Right ventricle myocardium superior (tissue), 1 donor: ENCODE measurements at regions of chr12 and their contacts with region 1.

Region 1: DNA sequence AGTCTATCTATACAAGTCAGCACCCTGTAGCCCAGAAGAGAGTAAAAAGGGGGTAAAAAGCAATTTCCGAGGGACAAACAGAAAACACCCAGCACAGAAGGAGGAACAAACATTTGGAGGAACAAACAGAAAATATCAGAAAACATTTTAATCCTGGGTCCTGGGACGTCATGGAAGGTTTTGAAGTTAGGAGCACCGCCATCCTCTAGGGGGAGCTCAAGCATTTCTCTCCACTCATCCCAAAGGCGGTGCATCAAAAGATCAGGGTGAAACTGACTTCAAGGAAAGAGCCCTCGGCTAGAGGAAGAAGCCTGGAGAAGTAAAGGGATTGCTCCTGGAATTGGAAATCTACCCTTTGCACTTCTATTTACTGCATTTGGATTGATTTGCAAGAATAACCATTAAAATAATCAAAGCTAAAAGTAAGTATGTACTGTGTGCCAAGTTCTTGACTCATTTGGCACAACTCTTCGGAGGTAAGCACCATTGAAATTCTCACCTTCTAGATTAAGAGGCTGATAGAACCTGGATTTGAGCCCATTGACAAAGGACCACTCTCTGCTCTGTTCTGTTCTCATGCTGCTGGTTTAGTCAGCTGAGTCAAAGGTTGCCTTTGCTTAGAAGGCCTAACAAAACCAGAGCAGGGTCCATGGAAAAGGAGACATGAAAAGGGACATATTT is 17.2 kb upstream of the POC1B start:
- DNase-seq: no peak
- ATAC-seq: peak; percentile 79

Region 2: GRCh38 chr12:89244536-89244935 is 298.5 kb before region 1 on chr12:
- intact Hi-C with region 1: no loop called
- DNase-seq: no peak
- ATAC-seq: peak; percentile 75

Region 3: DNA sequence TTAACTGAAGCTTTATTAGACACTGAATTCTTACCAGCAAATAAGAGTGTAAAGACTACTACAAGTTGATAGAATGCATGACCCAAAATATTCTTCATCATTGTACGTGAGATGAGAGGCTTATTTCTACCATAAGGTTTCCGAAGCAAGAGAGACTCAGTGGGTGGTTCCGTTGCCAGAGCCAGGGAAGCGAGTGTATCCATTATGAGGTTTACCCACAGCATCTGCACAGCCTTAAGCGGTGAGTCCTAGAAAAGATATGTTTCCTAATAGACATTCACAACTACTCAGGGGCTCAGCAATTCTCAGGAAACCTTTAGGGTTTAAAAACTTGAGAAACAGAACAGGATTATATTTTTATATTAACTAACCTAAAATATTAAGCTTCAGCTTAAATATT is 60.6 kb after region 1 on chr12:
- intact Hi-C with region 1: no loop called
- DNase-seq: no peak
- ATAC-seq: no peak

Region 4: DNA sequence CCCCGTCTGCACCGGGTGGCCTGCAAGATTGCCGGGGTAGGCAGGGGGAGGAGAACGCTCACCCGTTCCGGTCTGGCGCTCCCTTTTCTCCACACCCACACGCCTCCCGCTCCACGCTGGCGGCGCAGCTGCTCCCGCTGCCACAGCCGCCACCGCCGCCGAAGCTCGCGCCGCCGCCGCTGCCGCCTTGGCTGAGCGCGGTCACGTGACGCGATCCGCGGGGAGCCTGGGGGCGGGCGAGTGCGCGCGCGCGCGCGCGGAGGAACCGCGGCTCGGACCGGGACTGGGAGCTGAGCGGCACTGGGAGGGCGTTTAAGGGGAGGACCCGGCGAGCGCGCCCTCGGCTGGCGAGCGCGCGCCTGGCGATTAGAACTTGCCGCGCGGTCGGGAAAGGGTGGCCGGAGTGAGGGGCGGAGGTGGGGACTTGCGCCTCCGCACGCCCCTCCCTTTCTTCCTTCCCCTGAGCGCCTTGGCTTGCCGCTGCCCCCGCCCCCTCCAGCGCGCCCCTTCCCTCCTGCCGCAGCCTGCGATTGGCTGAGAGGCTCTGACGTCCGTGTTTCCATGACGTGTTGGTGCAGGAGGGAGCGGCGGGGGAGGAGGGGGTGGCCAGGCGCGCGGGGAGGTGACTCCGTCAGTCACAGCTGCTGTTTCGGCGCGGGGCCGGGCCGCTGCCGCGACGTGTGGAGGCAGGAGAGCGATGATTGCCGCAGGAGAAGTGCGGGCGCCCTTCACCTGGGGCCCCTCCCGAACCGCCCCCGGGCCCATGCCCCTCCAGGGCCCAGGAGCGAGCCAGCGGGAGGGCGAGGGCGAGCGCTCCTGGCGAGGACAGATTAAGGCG is 166.3 kb after region 1 on chr12:
- intact Hi-C with region 1: loop called (anchors 10 kb)
- DNase-seq: peak; percentile 98
- ATAC-seq: peak; percentile 94

Region 5: DNA sequence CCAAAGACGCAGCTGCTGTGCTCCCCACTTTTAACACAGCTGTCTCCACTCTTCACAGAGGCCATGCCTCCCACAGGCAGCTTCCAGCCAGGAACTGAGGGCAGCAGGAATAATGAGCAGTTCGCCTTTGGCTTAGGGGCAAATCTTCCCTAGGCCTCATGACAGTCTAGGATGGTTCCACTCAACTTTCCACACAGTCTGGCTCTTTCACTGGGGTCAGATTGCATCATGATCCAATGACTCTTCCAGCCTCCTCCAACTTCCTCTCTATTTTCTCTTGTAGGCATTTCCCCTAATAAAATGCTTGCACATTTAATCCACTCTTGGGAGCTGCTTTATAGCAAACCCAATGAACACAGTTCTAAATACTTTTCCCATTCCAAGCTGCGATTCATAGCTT is 437.2 kb after region 1 on chr12:
- intact Hi-C with region 1: no loop called
- DNase-seq: no peak
- ATAC-seq: peak; percentile 68

Region 6: GRCh38 chr12:90102957-90103652 is 560.1 kb after region 1 on chr12:
- intact Hi-C with region 1: loop called (anchors 5 kb)
- DNase-seq: no peak
- ATAC-seq: no peak

Region 7: DNA sequence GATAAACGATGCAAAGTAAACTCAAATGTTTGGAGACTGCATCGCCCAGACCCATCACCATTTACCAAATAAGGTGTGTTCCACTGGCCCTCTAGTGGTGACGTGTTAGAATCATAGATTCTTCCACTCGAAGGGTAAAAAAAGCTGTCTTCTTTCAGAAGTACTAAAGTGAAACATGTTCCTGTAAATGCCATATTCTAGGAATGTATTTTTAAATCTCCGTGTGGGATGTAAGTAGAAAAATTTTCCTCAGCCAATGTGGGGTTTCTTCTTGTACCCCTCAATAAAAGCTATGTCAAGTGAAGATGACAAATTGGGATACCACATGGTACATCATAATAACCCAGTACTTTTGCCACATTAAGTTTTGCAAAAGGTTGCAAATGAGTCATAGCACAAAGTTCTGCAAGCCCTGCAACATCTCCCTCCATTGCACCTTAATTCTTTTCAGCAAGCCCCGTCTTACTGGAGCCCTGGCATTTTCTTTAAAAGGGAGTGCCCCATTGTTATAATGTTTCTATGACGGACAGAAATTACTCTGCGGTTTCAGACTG is 1311.2 kb after region 1 on chr12:
- intact Hi-C with region 1: loop called (anchors 5 kb)
- DNase-seq: no peak
- ATAC-seq: peak; percentile 68